ENCODE measurements at regions of chr11 and their contacts with region 1.

Region 1: DNA sequence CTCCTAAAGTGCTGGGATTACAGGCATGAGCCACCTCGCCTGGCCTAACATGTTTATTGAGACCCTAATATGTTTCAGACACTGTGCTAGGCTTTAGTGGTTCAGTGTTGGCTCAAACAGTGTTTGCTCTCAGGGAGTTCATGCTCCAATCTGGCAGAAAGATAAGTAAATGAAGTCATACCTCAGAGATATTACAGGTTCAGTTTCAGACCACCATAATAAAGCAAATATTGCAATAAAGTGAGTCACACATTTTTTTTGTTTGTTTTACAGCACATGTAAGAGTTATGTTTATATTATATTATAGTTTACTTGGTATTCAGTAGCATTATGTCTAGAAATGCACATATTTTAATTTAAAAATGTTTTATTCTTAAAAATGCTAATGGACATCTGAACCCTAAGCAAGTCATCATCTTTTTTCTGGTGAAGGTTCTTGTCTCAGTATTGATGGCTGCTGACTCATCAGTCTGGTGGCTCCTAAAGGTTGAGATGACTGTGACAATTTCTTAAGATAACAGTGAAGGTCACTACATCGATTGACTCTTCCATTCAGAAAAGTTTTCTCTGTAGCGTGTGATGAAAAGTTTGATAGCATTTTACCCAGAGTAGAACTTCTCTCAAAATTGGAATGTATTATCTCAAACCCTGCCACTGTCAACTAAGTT is 243.0 kb upstream of the ANO5 start:
- DNase-seq: no peak
- ATAC-seq: no peak

Region 2: DNA sequence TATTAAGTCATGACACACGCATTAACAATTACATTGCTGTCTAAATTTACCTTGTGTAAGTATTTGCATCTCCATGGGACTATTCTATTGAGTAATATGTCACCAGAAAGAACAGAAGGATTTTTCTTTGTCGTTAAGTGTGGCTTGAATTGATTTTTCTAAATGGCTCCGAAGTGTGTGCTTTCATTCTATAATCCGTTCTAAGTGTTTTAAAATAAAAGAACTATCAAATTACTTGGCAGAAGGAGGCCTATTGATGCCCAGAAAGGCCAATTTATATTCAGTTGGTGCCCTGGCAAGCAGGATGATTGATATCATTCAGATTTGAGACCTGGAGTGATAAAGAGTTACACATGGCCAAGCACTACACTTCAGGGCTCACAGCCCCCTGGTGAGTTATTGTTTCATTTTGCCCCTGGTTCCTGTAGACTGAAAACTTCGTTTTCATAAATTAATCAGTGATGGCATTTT is 295.9 kb before region 1 on chr11:
- intact Hi-C with region 1: no loop called
- DNase-seq: no peak
- ATAC-seq: no peak

Region 3: DNA sequence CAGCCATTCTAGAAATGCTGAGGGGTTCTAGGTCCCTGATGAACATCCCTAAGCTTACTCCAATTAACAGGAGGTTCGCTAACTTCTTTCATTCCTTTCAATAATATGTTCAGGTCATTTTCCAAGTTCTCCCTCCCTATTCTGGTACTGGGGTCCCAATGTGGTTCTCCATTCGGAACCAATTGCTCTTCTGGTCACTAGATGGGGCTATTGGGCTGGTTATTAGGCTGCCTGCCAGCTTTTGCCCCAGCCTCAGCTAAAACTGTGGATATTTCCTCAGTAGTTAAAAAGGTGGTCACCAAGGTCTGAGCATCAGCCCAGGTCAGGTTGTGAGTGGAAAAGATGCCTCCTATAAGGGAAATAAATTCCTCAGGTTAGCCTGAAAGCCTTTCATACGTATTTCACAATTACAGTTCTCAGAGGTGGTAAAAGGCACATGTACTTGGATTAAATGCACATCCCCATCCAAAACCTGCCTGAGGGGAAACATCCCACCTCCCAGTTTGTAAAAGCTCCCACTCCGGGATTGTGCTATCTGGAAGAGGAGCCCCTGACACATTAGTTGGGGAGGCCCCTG is 1071.5 kb after region 1 on chr11:
- intact Hi-C with region 1: loop called (anchors 5 kb)
- DNase-seq: no peak
- ATAC-seq: no peak

Measured in sciatic nerve (tissue), 2 donors.